GM12878 (cell line): ENCODE measurements at regions of chr7 and their contacts with region 1.

Region 1: GRCh38 chr7:111735661-111736551 is 173.6 kb upstream of the IMMP2L start:
- DNase-seq: no peak
- ATAC-seq: peak; percentile 72
- H3K4me3 ChIP-seq: no peak overlapping the region
- H3K27ac ChIP-seq: no peak overlapping the region
- H3K4me1 ChIP-seq: no peaks in the 10 kb centered on the region
- H3K27me3 ChIP-seq: no peaks in the 10 kb centered on the region
- CTCF ChIP-seq: peak; percentile 69 to 89 (median 75)
- EP300 ChIP-seq: no peak
- POLR2A ChIP-seq: no peak
- RAD21 ChIP-seq: peak; percentile 95

Region 2: GRCh38 chr7:109844362-109844761 is 1891.5 kb before region 1 on chr7:
- CTCF ChIA-PET with region 1: no interaction called
- POLR2A ChIA-PET with region 1: no interaction called
- RAD21 ChIA-PET with region 1: no interaction called
- SMC1A ChIA-PET with region 1: no interaction called
- in situ Hi-C with region 1: no loop called
- intact Hi-C with region 1: loop called (anchors 1 kb)
- DNase-seq: no peak
- ATAC-seq: no peak
- H3K4me3 ChIP-seq: no peak overlapping the region
- H3K27ac ChIP-seq: no peak overlapping the region
- H3K4me1 ChIP-seq: no peaks in the 10 kb centered on the region
- H3K27me3 ChIP-seq: no peaks in the 10 kb centered on the region
- CTCF ChIP-seq: peak; percentile 20 to 41 (median 27); a peak in 4 of 6 replicates
- EP300 ChIP-seq: no peak
- POLR2A ChIP-seq: no peak
- RAD21 ChIP-seq: peak; percentile 72

Region 3: DNA sequence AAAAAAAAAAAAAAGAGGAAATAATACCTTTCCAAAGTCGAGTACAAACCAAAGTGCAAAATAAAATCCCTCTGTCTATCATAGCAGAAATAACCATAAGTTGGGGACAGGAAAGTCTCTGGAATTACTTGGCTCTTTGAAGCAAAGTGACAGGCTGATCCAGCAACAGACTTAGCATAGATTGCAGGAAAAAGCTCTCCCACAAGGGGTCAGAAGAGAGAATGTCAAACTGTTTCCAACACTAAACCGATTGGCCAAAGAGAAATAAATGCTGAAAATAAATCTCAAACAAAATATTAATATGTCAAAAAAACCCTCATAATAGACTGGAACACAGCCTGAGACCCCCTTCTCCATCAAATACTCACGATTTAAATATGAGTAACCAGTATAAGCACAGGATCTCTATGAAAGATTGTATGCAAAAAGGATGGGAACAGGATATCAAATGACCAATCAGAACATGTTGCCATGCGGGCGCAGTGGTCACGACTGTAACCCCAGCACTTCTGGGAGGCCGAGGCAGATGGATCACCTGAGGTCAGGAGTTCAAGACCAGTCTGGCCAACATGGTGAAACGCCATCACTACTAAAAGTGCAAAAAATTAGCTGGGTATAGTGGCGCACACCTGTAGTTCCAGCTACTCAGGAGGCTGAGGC is 1645.7 kb before region 1 on chr7:
- CTCF ChIA-PET with region 1: no interaction called
- POLR2A ChIA-PET with region 1: no interaction called
- RAD21 ChIA-PET with region 1: no interaction called
- SMC1A ChIA-PET with region 1: no interaction called
- in situ Hi-C with region 1: no loop called
- intact Hi-C with region 1: loop called (anchors 2 kb)
- DNase-seq: no peak
- ATAC-seq: peak; percentile 22; the same call in 1 of the 3 replicates
- H3K4me3 ChIP-seq: no peak overlapping the region
- H3K27ac ChIP-seq: no peak overlapping the region
- H3K4me1 ChIP-seq: no peaks in the 10 kb centered on the region
- H3K27me3 ChIP-seq: no peaks in the 10 kb centered on the region; a peak in 1 of 4 replicates
- CTCF ChIP-seq: peak in 2 of 3 experiments; percentile 23 to 26; a peak in 3 of 6 replicates
- EP300 ChIP-seq: no peak
- POLR2A ChIP-seq: no peak
- RAD21 ChIP-seq: peak; percentile 43; the same call in 1 of the 2 replicates

Region 4: DNA sequence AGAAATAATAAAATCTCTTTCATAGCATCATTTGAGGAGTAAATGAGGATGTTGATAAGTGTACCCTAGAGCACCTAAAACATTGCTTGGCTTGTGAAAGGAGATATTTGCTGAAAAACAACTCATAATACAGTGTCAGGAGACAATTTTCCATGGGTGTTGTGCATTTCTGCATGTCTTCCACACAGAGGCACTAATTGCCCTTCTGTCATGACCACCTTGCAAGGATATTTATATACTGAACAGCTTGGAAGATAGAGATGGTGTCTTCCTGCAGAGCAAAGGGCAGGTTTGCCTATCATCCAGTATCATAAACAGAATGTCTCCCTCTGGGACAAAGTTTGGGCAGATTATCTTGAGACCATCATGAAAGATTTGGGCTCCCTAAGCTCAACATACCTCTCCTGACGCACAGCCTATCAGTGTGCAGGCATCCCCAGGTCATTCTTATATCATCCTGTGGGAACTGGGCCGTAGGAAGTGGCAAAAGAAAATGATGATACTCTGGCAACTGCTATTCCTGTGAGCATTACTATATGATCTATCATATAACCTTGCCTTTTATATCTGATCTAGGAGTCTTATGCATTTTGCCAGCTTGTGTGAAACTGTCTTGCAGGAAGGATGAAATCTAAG is 1140.1 kb before region 1 on chr7:
- CTCF ChIA-PET with region 1: no interaction called
- POLR2A ChIA-PET with region 1: no interaction called
- RAD21 ChIA-PET with region 1: no interaction called
- SMC1A ChIA-PET with region 1: no interaction called
- in situ Hi-C with region 1: no loop called
- intact Hi-C with region 1: loop called (anchors 5 kb)
- DNase-seq: no peak
- ATAC-seq: no peak; the same call in 2 of the 3 replicates
- H3K4me3 ChIP-seq: no peak overlapping the region
- H3K27ac ChIP-seq: no peak overlapping the region
- H3K4me1 ChIP-seq: no peaks in the 10 kb centered on the region
- H3K27me3 ChIP-seq: no peaks in the 10 kb centered on the region
- CTCF ChIP-seq: no peak; a peak in 1 of 6 replicates
- EP300 ChIP-seq: no peak
- POLR2A ChIP-seq: no peak
- RAD21 ChIP-seq: peak; percentile 26; the same call in 1 of the 2 replicates

Region 5: GRCh38 chr7:111329367-111330234 is 406.3 kb before region 1 on chr7:
- CTCF ChIA-PET with region 1: interaction called, 3 read pairs
- POLR2A ChIA-PET with region 1: no interaction called
- RAD21 ChIA-PET with region 1: no interaction called
- SMC1A ChIA-PET with region 1: interaction called, 4 read pairs
- in situ Hi-C with region 1: loop called (anchors 10 kb)
- intact Hi-C with region 1: loop called (anchors 5 kb)
- DNase-seq: no peak
- ATAC-seq: peak; percentile 66
- H3K4me3 ChIP-seq: no peak overlapping the region
- H3K27ac ChIP-seq: no peak overlapping the region; the same call in 1 of the 2 replicates
- H3K4me1 ChIP-seq: 0 out of 2 replicates have a peak, but pooled peaks cover 3% of the 10 kb centered on the region
- H3K27me3 ChIP-seq: no peaks in the 10 kb centered on the region
- CTCF ChIP-seq: no peak
- EP300 ChIP-seq: no peak
- POLR2A ChIP-seq: no peak
- RAD21 ChIP-seq: peak; percentile 47

Region 6: DNA sequence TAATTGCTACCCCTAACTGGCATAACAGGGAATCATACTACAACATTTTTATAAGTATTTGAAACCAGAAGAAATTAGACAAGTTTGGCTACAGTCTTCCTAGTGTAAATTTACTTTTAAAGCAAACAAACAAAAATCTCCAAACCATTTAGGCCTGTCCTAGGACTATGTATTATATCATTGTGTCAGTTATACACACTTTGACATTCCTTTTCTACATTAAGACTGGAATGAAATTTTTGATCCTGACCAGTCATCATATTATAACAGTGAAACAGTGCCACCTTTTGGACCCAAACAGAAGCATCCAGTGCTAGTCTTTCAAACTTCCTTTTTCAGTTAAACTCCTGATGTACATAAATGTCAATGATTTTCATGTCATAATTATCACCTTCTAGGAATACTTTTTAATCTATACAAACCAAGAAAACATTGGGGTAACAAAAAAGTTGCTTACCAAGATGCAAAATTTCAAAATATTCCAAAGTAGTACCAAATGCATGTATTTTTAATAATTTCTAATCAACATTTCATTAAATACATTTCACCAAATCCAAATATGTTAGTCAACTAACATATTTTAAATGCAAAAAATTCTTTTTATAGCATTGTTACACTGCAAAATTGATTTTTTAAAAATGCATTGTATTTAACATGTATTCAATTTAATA is 249.3 kb before region 1 on chr7:
- CTCF ChIA-PET with region 1: interaction called, 3 read pairs
- POLR2A ChIA-PET with region 1: no interaction called
- RAD21 ChIA-PET with region 1: no interaction called
- SMC1A ChIA-PET with region 1: no interaction called
- in situ Hi-C with region 1: loop called (anchors 10 kb)
- intact Hi-C with region 1: loop called (anchors 2 kb)
- DNase-seq: peak; percentile 13
- ATAC-seq: peak; percentile 72
- H3K4me3 ChIP-seq: no peak overlapping the region
- H3K27ac ChIP-seq: no peak overlapping the region
- H3K4me1 ChIP-seq: no peaks in the 10 kb centered on the region
- H3K27me3 ChIP-seq: no peaks in the 10 kb centered on the region
- CTCF ChIP-seq: peak; percentile 60 to 75 (median 69)
- EP300 ChIP-seq: no peak
- POLR2A ChIP-seq: no peak
- RAD21 ChIP-seq: peak; percentile 83

Region 7: DNA sequence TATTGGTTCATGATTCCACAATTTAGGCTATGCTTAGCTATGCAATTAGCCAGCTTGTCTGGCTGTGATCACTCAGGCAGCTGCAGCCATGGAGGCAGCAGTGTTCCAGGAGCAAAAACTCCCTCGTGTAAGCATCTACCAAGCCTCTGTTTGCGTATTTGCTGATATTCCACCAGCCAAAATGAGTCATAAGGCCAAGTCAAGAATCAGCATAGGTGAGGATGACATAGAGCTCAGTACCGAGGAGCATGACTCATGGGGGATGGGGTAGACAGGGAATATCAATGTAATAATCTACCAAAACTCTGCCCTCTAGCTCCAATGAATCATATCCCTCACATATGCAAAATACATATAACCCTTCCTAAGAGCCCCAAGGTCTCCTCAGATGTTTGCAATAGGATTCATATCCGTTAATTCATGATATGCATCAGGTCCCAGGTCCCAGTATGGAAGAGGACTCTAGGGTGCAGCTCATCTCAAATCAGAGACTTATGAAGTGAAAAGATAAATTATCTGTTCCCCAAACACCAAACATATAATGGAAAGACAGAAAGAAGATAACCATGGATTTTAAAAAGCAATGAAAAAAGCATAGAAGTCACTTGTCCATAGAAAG is 236.8 kb before region 1 on chr7:
- CTCF ChIA-PET with region 1: no interaction called
- POLR2A ChIA-PET with region 1: no interaction called
- RAD21 ChIA-PET with region 1: no interaction called
- SMC1A ChIA-PET with region 1: no interaction called
- in situ Hi-C with region 1: loop called (anchors 10 kb)
- intact Hi-C with region 1: no loop called
- DNase-seq: no peak
- ATAC-seq: no peak
- H3K4me3 ChIP-seq: no peak overlapping the region
- H3K27ac ChIP-seq: no peak overlapping the region
- H3K4me1 ChIP-seq: no peaks in the 10 kb centered on the region
- H3K27me3 ChIP-seq: no peaks in the 10 kb centered on the region
- CTCF ChIP-seq: no peak
- EP300 ChIP-seq: no peak
- POLR2A ChIP-seq: no peak
- RAD21 ChIP-seq: no peak